ENCODE measurements at regions of chr1 and their contacts with region 1.

Region 1: DNA sequence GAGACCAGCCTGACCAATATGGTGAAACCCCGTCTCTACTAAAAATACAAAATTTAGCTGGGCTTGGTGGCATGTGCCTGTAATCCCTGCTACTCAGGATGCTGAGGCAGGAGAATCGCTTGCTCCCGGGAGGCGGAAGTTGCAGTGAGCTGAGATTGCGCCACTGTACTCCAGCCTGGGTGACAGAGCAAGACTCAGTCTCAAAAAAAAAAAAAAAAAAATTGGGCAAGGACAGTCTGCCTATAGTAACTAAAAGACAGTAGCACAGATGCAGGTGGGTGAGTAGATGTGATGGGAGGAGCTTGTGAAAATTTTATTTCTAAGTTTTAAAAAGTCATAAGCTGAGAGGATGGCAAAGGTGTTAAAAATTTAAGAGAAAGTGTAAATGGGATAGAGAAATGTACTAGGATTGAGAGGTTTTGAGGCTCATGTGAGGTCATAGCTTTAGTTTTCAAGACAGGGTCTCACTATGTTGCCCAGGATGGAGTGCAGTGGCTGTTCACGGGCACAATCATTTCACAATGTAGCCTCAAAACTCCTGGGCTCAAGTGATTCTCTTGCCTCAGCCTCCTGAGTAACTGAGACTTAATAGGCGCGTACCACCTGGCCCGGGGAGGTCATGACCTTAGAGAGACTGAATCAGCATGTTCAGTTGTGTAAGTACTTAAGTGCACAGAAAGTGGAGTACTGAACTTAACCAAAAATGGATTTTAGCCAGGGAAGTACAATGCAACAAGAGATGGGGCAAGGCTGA is 33.7 kb downstream of the PTP4A2 start:
- DNase-seq: no peak
- H3K4me3 ChIP-seq: no peak overlapping the region
- H3K27ac ChIP-seq: no peak overlapping the region
- H3K4me1 ChIP-seq: no peaks in the 10 kb centered on the region
- H3K27me3 ChIP-seq: no peaks in the 10 kb centered on the region
- CTCF ChIP-seq: no peak
- EP300 ChIP-seq: no peak
- POLR2A ChIP-seq: no peak

Region 2: GRCh38 chr1:31264790-31265386 is 639.6 kb before region 1 on chr1:
- in situ Hi-C with region 1: no loop called
- intact Hi-C with region 1: loop called (anchors 5 kb)
- DNase-seq: no peak
- H3K4me3 ChIP-seq: no peak overlapping the region
- H3K27ac ChIP-seq: no peak overlapping the region
- H3K4me1 ChIP-seq: peaks cover 0 to 10% (median 3%) of the 10 kb centered on the region in 4 donors
- H3K27me3 ChIP-seq: no peaks in the 10 kb centered on the region
- CTCF ChIP-seq: no peak
- EP300 ChIP-seq: no peak
- POLR2A ChIP-seq: no peak

Measured in transverse colon (tissue), 4 donors.